GM23248 (cell line): ENCODE measurements at regions of chr13 and their contacts with region 1.

Region 1: DNA sequence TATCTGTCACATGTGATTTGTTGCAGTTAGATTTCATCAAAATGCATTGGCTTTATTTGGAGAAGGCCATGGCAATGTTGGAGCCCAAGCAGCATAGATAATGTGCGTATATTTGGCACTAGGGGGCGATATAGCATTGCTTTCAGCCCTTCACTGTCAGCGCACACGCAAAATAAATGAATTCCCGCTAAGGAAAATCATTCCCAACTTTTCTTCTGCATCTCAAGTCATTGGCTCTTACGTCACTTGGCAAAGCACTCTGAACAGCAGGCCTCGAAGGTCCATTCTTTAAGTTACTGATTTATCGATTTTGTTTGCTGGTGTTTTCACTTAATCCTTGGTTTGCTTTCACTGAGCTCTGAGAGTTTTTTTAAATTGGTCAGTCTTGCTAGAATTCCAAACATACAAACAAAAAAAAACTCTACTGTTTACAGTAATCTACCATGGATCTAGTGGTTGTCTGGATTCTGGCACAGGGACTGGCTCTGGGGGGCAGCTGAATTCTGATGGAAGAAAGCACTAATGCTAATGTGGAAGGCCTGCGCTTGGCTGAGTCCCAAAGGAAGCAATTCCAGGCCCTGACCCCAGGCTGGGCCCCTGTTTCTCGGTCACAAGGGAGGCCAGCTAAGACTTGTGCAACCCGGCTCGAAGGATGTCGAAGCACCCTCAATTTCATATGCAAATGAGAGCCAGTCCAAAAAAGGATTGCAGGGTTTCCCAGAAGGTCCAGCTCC is 97.7 kb upstream of the IPO5 start:
- DNase-seq: peak; percentile 88
- H3K4me3 ChIP-seq: no peak overlapping the region
- H3K27ac ChIP-seq: no peak overlapping the region
- H3K4me1 ChIP-seq: peaks cover 15% of the 10 kb centered on the region
- H3K27me3 ChIP-seq: no peaks in the 10 kb centered on the region

Region 2: GRCh38 chr13:97986835-97987234 is 131.1 kb after region 1 on chr13:
- in situ Hi-C with region 1: loop called (anchors 10 kb)
- DNase-seq: no peak
- H3K4me3 ChIP-seq: no peak overlapping the region
- H3K27ac ChIP-seq: no peak overlapping the region
- H3K4me1 ChIP-seq: peaks cover 10% of the 10 kb centered on the region
- H3K27me3 ChIP-seq: no peaks in the 10 kb centered on the region

Region 3: DNA sequence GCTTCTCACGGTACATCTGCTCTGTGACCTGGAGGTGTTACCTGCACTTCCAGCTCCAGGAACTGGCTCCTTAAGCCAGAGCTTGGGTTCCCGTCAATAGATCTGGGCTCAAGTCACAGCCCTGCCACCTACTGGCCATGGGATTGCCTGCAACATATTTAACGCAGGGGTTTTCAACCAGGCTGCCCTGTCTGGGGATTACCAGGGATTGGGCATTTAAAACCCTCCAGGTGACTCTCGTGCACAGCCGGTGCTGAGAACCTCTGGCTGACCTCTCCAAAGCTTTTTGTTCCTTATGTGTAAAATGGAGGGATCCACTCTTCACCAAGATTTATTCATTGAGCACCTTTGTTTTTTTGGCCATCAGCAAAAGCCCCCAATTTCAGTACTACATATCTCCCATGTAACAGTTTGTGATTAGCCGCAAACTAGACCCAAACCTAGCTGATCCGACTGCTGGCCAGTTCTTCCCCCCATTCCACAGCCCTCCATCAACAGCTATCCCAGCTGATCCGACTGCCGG is 797.8 kb after region 1 on chr13:
- in situ Hi-C with region 1: loop called (anchors 25 kb)
- DNase-seq: peak; percentile 86
- H3K4me3 ChIP-seq: no peak overlapping the region
- H3K27ac ChIP-seq: no peak overlapping the region
- H3K4me1 ChIP-seq: peaks cover 7% of the 10 kb centered on the region
- H3K27me3 ChIP-seq: no peaks in the 10 kb centered on the region

Region 4: GRCh38 chr13:98798849-98799645 is 943.3 kb after region 1 on chr13:
- in situ Hi-C with region 1: no loop called
- DNase-seq: peak; percentile 90
- H3K4me3 ChIP-seq: peak overlapping the region; percentile 6; the same call in 1 of the 2 replicates
- H3K27ac ChIP-seq: peak overlapping the region; percentile 20; the same call in 1 of the 2 replicates
- H3K4me1 ChIP-seq: peaks cover 17% of the 10 kb centered on the region
- H3K27me3 ChIP-seq: no peaks in the 10 kb centered on the region